WTC11 (cell line): ENCODE measurements at regions of chr11 and their contacts with region 1.

Region 1: GRCh38 chr11:14308114-14308896 is 50.7 kb downstream of the RRAS2 start:
- DNase-seq: no peak
- ATAC-seq: peak; percentile 41
- H3K4me3 Mint-ChIP-seq: no peak overlapping the region
- H3K27ac Mint-ChIP-seq: peak overlapping the region; percentile 28; the same call in 1 of the 2 replicates
- H3K4me1 Mint-ChIP-seq: peaks cover 52% of the 10 kb centered on the region
- H3K27me3 Mint-ChIP-seq: no peaks in the 10 kb centered on the region
- CTCF ChIP-seq: peak; percentile 38; the same call in 1 of the 2 replicates

Region 2: GRCh38 chr11:14212986-14213385 is 95.3 kb before region 1 on chr11:
- CTCF ChIA-PET with region 1: no interaction called
- POLR2A ChIA-PET with region 1: no interaction called
- DNase-seq: no peak
- ATAC-seq: no peak
- H3K4me3 Mint-ChIP-seq: no peak overlapping the region
- H3K27ac Mint-ChIP-seq: no peak overlapping the region
- H3K4me1 Mint-ChIP-seq: no peaks in the 10 kb centered on the region
- H3K27me3 Mint-ChIP-seq: no peaks in the 10 kb centered on the region; the same call in none of the 2 replicates
- CTCF ChIP-seq: no peak

Region 3: DNA sequence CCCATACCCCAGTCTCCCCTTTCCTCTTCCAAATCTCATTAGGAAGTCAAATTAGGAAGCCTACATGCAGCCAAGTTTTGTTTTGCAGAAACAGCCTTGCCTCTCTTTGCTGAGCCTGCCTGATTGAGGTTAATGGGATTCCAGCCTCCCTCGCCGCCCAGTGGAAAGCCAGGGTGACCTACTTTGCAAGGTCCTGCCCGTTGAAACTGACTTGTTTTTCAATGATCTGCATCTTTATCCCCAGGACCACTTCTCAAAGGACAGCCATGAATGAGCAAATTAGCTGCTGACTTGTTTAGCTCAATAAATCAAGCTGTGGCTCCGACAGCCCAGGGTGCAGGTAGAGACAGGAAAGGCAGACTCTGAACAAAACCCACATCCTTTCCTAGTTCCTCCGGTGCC is 59.7 kb before region 1 on chr11:
- CTCF ChIA-PET with region 1: no interaction called
- POLR2A ChIA-PET with region 1: no interaction called
- DNase-seq: peak; percentile 60
- ATAC-seq: peak; percentile 73
- H3K4me3 Mint-ChIP-seq: no peak overlapping the region
- H3K27ac Mint-ChIP-seq: peak overlapping the region; percentile 50; the same call in 1 of the 2 replicates
- H3K4me1 Mint-ChIP-seq: peaks cover 28% of the 10 kb centered on the region
- H3K27me3 Mint-ChIP-seq: peaks cover 2% of the 10 kb centered on the region; the same call in 1 of the 2 replicates
- CTCF ChIP-seq: no peak

Region 4: DNA sequence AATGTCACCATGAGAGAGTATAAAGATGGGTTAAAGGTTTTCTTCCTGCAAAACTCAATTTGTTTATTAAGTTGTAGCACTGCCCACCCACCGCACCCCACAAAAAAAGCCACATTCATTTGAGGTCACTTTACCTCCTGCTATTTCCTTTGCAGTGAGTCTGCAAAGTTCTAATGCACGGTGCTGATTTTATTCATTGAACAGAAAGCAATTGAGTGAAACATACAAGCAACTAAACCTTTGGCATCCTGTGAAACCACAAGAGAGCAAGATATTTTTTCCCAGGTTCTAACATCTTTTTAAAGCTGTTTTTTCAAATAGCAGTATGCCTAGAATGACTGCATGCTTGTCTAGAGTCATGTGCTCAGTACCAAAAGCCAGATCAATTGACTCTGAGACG is 11.7 kb after region 1 on chr11:
- CTCF ChIA-PET with region 1: interaction called, 19 read pairs
- POLR2A ChIA-PET with region 1: no interaction called
- DNase-seq: no peak
- ATAC-seq: no peak
- H3K4me3 Mint-ChIP-seq: no peak overlapping the region
- H3K27ac Mint-ChIP-seq: peak overlapping the region; percentile 90
- H3K4me1 Mint-ChIP-seq: peaks cover 83% of the 10 kb centered on the region
- H3K27me3 Mint-ChIP-seq: no peaks in the 10 kb centered on the region
- CTCF ChIP-seq: no peak

Region 5: GRCh38 chr11:14386895-14387480 is 78.7 kb after region 1 on chr11:
- CTCF ChIA-PET with region 1: interaction called, 11 read pairs
- POLR2A ChIA-PET with region 1: no interaction called
- DNase-seq: peak; percentile 53
- ATAC-seq: peak; percentile 94
- H3K4me3 Mint-ChIP-seq: no peak overlapping the region
- H3K27ac Mint-ChIP-seq: no peak overlapping the region
- H3K4me1 Mint-ChIP-seq: peaks cover 14% of the 10 kb centered on the region
- H3K27me3 Mint-ChIP-seq: peaks cover 11% of the 10 kb centered on the region
- CTCF ChIP-seq: no peak